Activated naive CD8-positive, alpha-beta T cell treated with anti-CD3 and anti-CD28 coated beads, Interleukin-2, amount 10 ng/mL, durations not matched to agents 7 days and 5 days (primary cell): ENCODE measurements at regions of chr16 and their contacts with region 1.

Region 1: GRCh38 chr16:2155091-2156021 is at the start of gene TRAF7:
- DNase-seq: peak; percentile 95
- ATAC-seq: peak; percentile 94
- H3K4me3 Mint-ChIP-seq: peak within 1 kb of the TSS; percentile 97
- H3K27ac Mint-ChIP-seq: peak within 1 kb of the TSS; percentile 92
- H3K4me1 Mint-ChIP-seq: peaks cover 25% of the 10 kb centered on the region
- H3K27me3 Mint-ChIP-seq: no peaks in the 10 kb centered on the region
- total RNA-seq, gene TRAF7: 50.2 to 51.8 TPM

Region 2: GRCh38 chr16:1964506-1965395 is 190.6 kb before region 1 on chr16 and contains the start of gene RPS2:
- POLR2A ChIA-PET with region 1: interaction called, 20 read pairs
- DNase-seq: peak; percentile 99
- ATAC-seq: peak; percentile 90
- H3K4me3 Mint-ChIP-seq: peak within 1 kb of the TSS; percentile 96
- H3K27ac Mint-ChIP-seq: peak within 1 kb of the TSS; percentile 96
- H3K4me1 Mint-ChIP-seq: peaks cover 42% of the 10 kb centered on the region
- H3K27me3 Mint-ChIP-seq: no peaks in the 10 kb centered on the region
- total RNA-seq, gene RPS2: 2,404 to 2,409 TPM

Region 3: DNA sequence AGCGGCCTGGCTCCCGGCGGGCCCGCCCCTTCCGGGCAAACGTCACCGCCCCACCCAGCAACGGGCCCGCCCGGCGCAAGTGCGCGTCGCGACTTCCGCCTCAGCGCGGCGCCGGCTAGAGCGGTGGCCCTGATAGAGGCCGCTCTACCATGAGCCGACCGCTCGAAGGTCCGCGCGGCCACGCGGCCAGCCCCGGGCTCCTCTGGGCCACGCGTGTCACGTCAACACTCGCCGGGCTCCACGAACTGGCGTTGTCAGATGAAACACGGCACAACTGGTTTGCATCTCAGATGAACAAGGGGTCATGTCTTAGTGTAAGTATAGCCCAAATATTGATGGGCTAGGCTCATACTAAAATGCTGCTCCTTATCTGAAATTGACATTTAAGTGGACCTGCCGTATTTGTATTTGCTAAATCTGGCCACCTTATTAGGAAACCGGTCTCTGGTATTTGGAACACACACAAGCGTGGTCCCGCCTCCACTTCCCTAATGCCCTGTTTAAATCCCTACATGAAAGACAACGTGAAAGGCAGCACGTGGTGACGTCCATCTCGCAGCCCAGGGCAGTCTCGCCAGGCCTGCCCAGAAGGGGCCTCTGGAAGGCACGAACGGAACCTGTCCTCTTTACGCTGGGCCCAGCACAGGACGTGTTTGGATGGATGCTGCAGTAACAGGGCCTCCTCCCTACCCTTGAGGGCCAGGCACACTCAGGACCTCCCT is 145.4 kb before region 1 on chr16 and contains the start of gene ZNF598:
- POLR2A ChIA-PET with region 1: interaction called, 25 read pairs
- DNase-seq: peak; percentile 91
- ATAC-seq: peak; percentile 86
- H3K4me3 Mint-ChIP-seq: peak within 1 kb of the TSS; percentile 93
- H3K27ac Mint-ChIP-seq: peak within 1 kb of the TSS; percentile 92
- H3K4me1 Mint-ChIP-seq: peaks cover 25% of the 10 kb centered on the region
- H3K27me3 Mint-ChIP-seq: no peaks in the 10 kb centered on the region
- total RNA-seq, gene ZNF598: 67.8 to 77.1 TPM

Region 4: GRCh38 chr16:2047330-2048115 is 107.8 kb before region 1 on chr16 and contains the starts of genes NTHL1 and TSC2:
- POLR2A ChIA-PET with region 1: interaction called, 26 read pairs
- DNase-seq: peak; percentile 95
- ATAC-seq: peak; percentile 89
- H3K4me3 Mint-ChIP-seq: peak within 1 kb of the TSS; percentile 94
- H3K27ac Mint-ChIP-seq: peak within 1 kb of the TSS; percentile 80
- H3K4me1 Mint-ChIP-seq: peaks cover 13% of the 10 kb centered on the region
- H3K27me3 Mint-ChIP-seq: no peaks in the 10 kb centered on the region
- total RNA-seq, gene NTHL1: 19.4 to 20.7 TPM
- total RNA-seq, gene TSC2: 113 to 125 TPM

Region 5: GRCh38 chr16:2115591-2115973 is 39.8 kb before region 1 on chr16:
- POLR2A ChIA-PET with region 1: no interaction called
- DNase-seq: no peak
- ATAC-seq: no peak
- H3K4me3 Mint-ChIP-seq: no peak overlapping the region
- H3K27ac Mint-ChIP-seq: no peak overlapping the region
- H3K4me1 Mint-ChIP-seq: no peaks in the 10 kb centered on the region
- H3K27me3 Mint-ChIP-seq: no peaks in the 10 kb centered on the region

Region 6: DNA sequence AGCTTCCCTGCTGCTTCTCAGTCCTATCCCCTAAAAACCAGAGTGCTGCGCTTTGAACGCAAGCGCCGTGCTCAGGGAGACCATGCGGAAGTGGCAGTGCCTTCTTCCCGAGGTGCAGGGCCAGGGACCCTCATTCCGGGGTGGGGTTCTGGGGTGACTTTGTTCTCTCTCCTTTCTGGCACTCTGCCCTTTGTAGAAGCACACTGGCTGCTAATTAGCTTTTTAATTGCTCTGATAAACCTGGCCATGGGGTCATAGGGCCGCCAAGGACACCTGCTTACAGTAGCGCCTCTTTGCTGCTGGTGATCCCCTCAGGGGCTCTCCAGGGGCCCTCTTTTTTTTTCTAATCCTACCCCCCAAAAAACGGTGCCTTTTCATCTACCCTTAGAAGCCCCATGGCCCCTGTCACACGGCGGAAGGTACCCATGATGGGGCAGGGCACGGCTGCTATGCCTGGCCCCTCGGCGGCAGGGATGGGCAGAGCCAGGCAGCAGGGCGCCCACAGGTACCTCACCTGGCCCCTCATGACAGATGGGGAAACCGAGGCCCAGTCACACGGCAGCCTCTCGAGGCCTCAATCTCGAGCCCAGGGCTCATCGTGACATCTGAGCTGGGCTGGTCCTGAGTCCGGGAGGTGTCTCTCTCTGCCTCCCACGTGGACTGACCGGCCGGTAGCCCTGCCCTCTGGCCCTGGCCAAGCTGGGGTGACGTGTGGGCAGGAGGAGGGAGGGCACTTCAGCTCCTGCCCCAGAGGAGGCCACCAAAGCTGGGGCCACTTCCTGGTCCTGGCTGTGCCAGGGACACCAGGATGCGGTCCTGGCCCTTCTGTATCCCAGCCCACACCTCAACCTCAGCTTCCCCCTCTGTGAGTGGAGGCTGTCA is 11.6 kb after region 1 on chr16:
- POLR2A ChIA-PET with region 1: interaction called, 10 read pairs
- DNase-seq: no peak
- ATAC-seq: no peak
- H3K4me3 Mint-ChIP-seq: no peak overlapping the region
- H3K27ac Mint-ChIP-seq: no peak overlapping the region
- H3K4me1 Mint-ChIP-seq: no peaks in the 10 kb centered on the region
- H3K27me3 Mint-ChIP-seq: no peaks in the 10 kb centered on the region

Region 7: GRCh38 chr16:2251483-2252240 is 96.3 kb after region 1 on chr16 and contains the start of gene ECI1:
- POLR2A ChIA-PET with region 1: interaction called, 31 read pairs
- DNase-seq: peak; percentile 90
- ATAC-seq: peak; percentile 84
- H3K4me3 Mint-ChIP-seq: peak within 1 kb of the TSS; percentile 96
- H3K27ac Mint-ChIP-seq: peak within 1 kb of the TSS; percentile 95
- H3K4me1 Mint-ChIP-seq: peaks cover 4% of the 10 kb centered on the region
- H3K27me3 Mint-ChIP-seq: no peaks in the 10 kb centered on the region
- total RNA-seq, gene ECI1: 37.4 to 38.0 TPM

Region 8: GRCh38 chr16:2340564-2341455 is 185.5 kb after region 1 on chr16 and contains the start of gene ABCA3:
- POLR2A ChIA-PET with region 1: no interaction called
- DNase-seq: peak; percentile 100
- ATAC-seq: peak; percentile 93
- H3K4me3 Mint-ChIP-seq: peak within 1 kb of the TSS; percentile 82
- H3K27ac Mint-ChIP-seq: peak within 1 kb of the TSS; percentile 45
- H3K4me1 Mint-ChIP-seq: peaks cover 17% of the 10 kb centered on the region
- H3K27me3 Mint-ChIP-seq: peaks cover 44% of the 10 kb centered on the region
- total RNA-seq, gene ABCA3: 7.8 to 8.3 TPM

Region 9: DNA sequence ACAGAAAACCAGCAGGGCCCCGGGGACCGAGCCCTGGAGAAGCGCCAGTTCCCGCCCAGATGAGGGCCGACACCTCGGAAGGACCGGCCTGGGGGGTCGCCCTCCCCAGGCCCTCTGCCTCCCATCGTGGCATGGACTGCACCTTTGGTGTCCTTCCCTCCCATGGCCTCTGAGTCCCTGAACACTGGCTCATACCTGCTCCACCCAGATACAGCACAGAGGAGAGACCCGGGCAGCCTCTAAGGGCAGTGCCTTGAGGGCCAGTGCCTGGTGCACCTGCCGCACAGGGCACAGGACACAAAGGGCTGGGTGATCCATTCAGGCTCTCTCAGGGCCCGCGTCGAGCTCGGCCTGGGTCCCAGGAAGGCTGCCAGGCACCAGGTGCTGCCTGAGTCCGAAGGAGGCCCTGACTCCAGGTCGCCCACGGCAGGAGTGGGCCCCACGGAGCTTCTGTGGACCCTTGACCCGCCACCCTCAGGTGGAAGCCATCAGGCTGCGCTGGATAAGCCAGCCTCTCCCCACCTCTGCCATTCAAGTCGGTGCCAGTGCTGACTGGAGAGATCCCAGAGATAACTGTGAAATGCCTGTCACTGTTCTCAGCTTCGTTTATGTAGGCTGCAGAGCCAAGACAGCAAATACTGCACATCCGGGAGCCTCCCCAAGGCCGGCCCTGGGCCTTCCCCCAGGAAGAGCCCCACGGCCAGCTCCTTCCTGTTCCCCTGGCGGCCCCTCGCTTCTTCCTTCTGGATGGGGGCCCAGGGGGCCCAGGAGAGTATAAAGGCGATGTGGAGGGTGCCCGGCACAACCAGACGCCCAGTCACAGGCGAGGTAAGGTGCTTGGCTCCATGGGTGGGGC is 674.4 kb after region 1 on chr16 and contains the start of gene ZG16B:
- POLR2A ChIA-PET with region 1: no interaction called
- DNase-seq: no peak
- ATAC-seq: peak; percentile 72
- H3K4me3 Mint-ChIP-seq: peak within 1 kb of the TSS; percentile 49
- H3K27ac Mint-ChIP-seq: peak within 1 kb of the TSS; percentile 65
- H3K4me1 Mint-ChIP-seq: no peaks in the 10 kb centered on the region
- H3K27me3 Mint-ChIP-seq: no peaks in the 10 kb centered on the region
- total RNA-seq, gene ZG16B: 6.7 to 8.1 TPM